Caco-2 (cell line): ENCODE measurements at regions of chr19 and their contacts with region 1.

Region 1: GRCh38 chr19:5470264-5470671 is 15.1 kb downstream of the ZNRF4 start:
- DNase-seq: peak; percentile 82 to 93
- H3K4me3 ChIP-seq: no peak overlapping the region
- H3K4me3 Mint-ChIP-seq: peak overlapping the region; percentile 25
- H3K27ac Mint-ChIP-seq: peak overlapping the region; percentile 89
- H3K4me1 ChIP-seq: peaks cover 21% of the 10 kb centered on the region
- H3K4me1 Mint-ChIP-seq: peaks cover 16% of the 10 kb centered on the region
- H3K27me3 ChIP-seq: no peaks in the 10 kb centered on the region
- H3K27me3 Mint-ChIP-seq: no peaks in the 10 kb centered on the region
- CTCF ChIP-seq: no peak

Region 2: DNA sequence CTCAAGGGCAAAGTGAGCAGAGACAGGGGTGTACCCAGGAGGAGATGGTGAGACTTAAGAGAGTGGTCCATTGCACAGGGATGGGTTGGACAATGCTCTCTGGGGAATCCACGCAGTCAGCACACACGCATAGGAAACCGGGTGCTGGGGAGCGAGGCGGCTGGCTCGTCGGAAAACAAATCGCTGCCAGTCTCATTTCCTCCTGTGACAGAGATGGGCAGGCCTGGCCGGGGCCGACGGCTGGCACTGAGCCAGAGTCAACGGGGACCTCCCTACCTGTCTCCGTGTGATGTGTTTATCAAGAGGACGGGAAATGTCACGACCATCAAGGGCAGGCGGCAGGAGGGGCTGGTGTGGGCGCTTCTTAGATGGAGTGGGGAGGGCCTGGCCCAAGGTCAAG is 157.0 kb before region 1 on chr19:
- CTCF ChIA-PET with region 1: no interaction called
- POLR2A ChIA-PET with region 1: no interaction called
- intact Hi-C with region 1: no loop called
- DNase-seq: no peak
- H3K4me3 ChIP-seq: no peak overlapping the region
- H3K4me3 Mint-ChIP-seq: no peak overlapping the region
- H3K27ac Mint-ChIP-seq: no peak overlapping the region
- H3K4me1 ChIP-seq: no peaks in the 10 kb centered on the region
- H3K4me1 Mint-ChIP-seq: no peaks in the 10 kb centered on the region
- H3K27me3 ChIP-seq: no peaks in the 10 kb centered on the region
- H3K27me3 Mint-ChIP-seq: no peaks in the 10 kb centered on the region
- CTCF ChIP-seq: no peak

Region 3: GRCh38 chr19:5403968-5404640 is 66.2 kb before region 1 on chr19:
- CTCF ChIA-PET with region 1: no interaction called
- POLR2A ChIA-PET with region 1: no interaction called
- intact Hi-C with region 1: loop called (anchors 10 kb)
- DNase-seq: peak; percentile 88 to 90
- H3K4me3 ChIP-seq: no peak overlapping the region
- H3K4me3 Mint-ChIP-seq: no peak overlapping the region
- H3K27ac Mint-ChIP-seq: no peak overlapping the region
- H3K4me1 ChIP-seq: no peaks in the 10 kb centered on the region
- H3K4me1 Mint-ChIP-seq: no peaks in the 10 kb centered on the region
- H3K27me3 ChIP-seq: no peaks in the 10 kb centered on the region
- H3K27me3 Mint-ChIP-seq: peaks cover 18% of the 10 kb centered on the region
- CTCF ChIP-seq: no peak

Region 4: GRCh38 chr19:5524081-5524480 is 53.8 kb after region 1 on chr19:
- CTCF ChIA-PET with region 1: no interaction called
- POLR2A ChIA-PET with region 1: no interaction called
- intact Hi-C with region 1: no loop called
- DNase-seq: no peak
- H3K4me3 ChIP-seq: no peak overlapping the region
- H3K4me3 Mint-ChIP-seq: no peak overlapping the region
- H3K27ac Mint-ChIP-seq: no peak overlapping the region
- H3K4me1 ChIP-seq: no peaks in the 10 kb centered on the region
- H3K4me1 Mint-ChIP-seq: no peaks in the 10 kb centered on the region
- H3K27me3 ChIP-seq: no peaks in the 10 kb centered on the region
- H3K27me3 Mint-ChIP-seq: peaks cover 11% of the 10 kb centered on the region
- CTCF ChIP-seq: no peak